ENCODE measurements at regions of chr11 and their contacts with region 1.

Region 1: GRCh38 chr11:17730608-17731462 is 3.7 kb upstream of the KCNC1 start:
- DNase-seq: peak; percentile 78
- H3K4me3 ChIP-seq: no peak overlapping the region
- H3K27ac ChIP-seq: no peak overlapping the region
- H3K4me1 ChIP-seq: peaks cover 7% of the 10 kb centered on the region
- H3K27me3 ChIP-seq: peaks cover 22 to 30% of the 10 kb centered on the region in 2 experiments
- CTCF ChIP-seq: peak; percentile 69 to 91
- POLR2A ChIP-seq: no peak

Region 2: DNA sequence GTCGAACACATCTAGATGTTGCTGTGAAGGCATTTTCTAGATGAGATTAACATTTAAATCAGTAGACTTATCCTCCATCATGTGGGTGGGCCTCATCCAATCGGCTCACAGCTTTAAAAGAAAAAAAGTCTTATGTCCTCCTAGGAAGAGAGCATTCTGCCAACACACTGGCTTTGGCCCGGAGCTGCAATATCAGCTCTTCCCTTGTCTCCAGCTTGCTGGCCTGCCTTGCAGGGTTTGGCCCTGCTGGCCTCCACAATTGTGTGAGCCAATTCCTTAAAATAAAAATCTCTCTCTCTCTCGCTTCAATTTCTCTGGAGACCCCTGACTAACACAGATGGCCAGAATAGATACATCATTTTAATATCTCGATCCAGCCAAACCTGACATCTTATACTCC is 241.1 kb before region 1 on chr11:
- CTCF ChIA-PET with region 1: no interaction called
- POLR2A ChIA-PET with region 1: no interaction called
- dilution Hi-C with region 1: no loop called
- intact Hi-C with region 1: loop called (anchors 5 kb)
- DNase-seq: no peak
- H3K4me3 ChIP-seq: no peak overlapping the region
- H3K27ac ChIP-seq: no peak overlapping the region
- H3K4me1 ChIP-seq: no peaks in the 10 kb centered on the region
- H3K27me3 ChIP-seq: peaks cover 0 to 2% of the 10 kb centered on the region in 2 experiments
- CTCF ChIP-seq: no peak
- POLR2A ChIP-seq: no peak

Region 3: DNA sequence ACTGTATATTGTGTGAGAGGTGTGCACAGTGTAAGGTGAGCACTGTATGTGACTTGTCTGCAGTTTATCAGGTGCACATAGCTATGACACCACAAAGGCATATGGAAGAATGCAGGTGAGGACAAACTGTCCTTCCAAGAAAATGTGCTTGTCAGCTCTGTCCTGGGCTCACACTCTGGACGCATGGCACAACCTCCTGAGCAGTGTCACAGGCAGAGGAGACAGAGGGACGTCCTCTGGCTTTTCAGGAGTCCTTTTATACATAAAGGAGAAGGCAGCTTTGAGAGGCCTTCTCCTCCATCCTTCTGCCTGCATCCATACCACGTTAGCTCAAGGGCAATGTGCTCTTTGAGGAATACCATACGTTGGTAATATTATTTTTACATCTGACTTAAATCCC is 19.0 kb before region 1 on chr11:
- CTCF ChIA-PET with region 1: interaction called, 13 read pairs
- POLR2A ChIA-PET with region 1: no interaction called
- dilution Hi-C with region 1: no loop called
- intact Hi-C with region 1: no loop called
- DNase-seq: no peak
- H3K4me3 ChIP-seq: no peak overlapping the region
- H3K27ac ChIP-seq: no peak overlapping the region
- H3K4me1 ChIP-seq: no peaks in the 10 kb centered on the region
- H3K27me3 ChIP-seq: peaks cover 7 to 21% of the 10 kb centered on the region in 2 experiments
- CTCF ChIP-seq: no peak
- POLR2A ChIP-seq: no peak

Region 4: DNA sequence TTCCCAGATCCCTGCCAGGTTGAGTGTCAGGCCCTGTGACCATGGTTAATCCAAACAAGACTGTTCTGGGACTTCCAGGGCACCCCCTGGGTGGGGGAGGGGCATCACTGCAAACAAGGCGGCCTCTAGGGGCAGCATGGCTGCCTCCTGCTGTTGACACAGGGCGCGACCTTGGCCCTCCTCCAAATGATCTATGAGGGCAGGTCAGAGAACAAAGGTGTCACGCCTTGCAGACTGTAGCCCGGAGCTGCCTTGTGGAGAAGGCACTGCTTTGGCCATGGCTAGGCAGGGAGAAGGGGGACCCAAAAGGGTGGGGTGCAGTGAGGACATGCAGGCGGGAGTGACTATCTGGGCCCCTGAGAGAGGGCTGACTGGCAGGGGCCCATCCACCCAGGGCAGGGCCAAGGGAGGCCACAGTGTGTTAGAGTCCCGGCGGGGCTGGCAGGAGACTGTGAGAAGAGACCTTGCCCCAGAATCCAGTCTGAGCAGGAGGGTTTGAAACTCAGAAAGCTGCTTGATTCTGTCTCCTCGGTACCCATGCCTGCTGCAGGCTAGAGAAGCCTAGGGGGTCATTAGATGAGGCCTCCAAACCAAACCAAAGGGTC is 39.3 kb after region 1 on chr11:
- CTCF ChIA-PET with region 1: interaction called, 19 read pairs
- POLR2A ChIA-PET with region 1: no interaction called
- dilution Hi-C with region 1: no loop called
- intact Hi-C with region 1: no loop called
- DNase-seq: no peak
- H3K4me3 ChIP-seq: no peak overlapping the region
- H3K27ac ChIP-seq: no peak overlapping the region
- H3K4me1 ChIP-seq: no peaks in the 10 kb centered on the region
- H3K27me3 ChIP-seq: no peaks in the 10 kb centered on the region
- CTCF ChIP-seq: no peak
- POLR2A ChIP-seq: no peak

Region 5: GRCh38 chr11:17798253-17798652 is 67.4 kb after region 1 on chr11:
- CTCF ChIA-PET with region 1: no interaction called
- POLR2A ChIA-PET with region 1: no interaction called
- dilution Hi-C with region 1: no loop called
- intact Hi-C with region 1: no loop called
- DNase-seq: no peak
- H3K4me3 ChIP-seq: no peak overlapping the region
- H3K27ac ChIP-seq: no peak overlapping the region
- H3K4me1 ChIP-seq: no peaks in the 10 kb centered on the region
- H3K27me3 ChIP-seq: no peaks in the 10 kb centered on the region
- CTCF ChIP-seq: no peak
- POLR2A ChIP-seq: no peak

Region 6: GRCh38 chr11:17972987-17973386 is 242.2 kb after region 1 on chr11:
- CTCF ChIA-PET with region 1: interaction called, 593 read pairs
- POLR2A ChIA-PET with region 1: interaction called, 3 read pairs
- dilution Hi-C with region 1: no loop called
- intact Hi-C with region 1: loop called (anchors 1 kb)
- DNase-seq: peak; percentile 44
- H3K4me3 ChIP-seq: no peak overlapping the region
- H3K27ac ChIP-seq: no peak overlapping the region
- H3K4me1 ChIP-seq: no peaks in the 10 kb centered on the region
- H3K27me3 ChIP-seq: no peaks in the 10 kb centered on the region
- CTCF ChIP-seq: peak; percentile 56 to 77
- POLR2A ChIP-seq: no peak

Region 7: GRCh38 chr11:17986007-17986710 is 255.3 kb after region 1 on chr11:
- CTCF ChIA-PET with region 1: interaction called, 593 read pairs
- POLR2A ChIA-PET with region 1: no interaction called
- dilution Hi-C with region 1: no loop called
- intact Hi-C with region 1: no loop called
- DNase-seq: no peak
- H3K4me3 ChIP-seq: no peak overlapping the region
- H3K27ac ChIP-seq: no peak overlapping the region
- H3K4me1 ChIP-seq: no peaks in the 10 kb centered on the region
- H3K27me3 ChIP-seq: no peaks in the 10 kb centered on the region
- CTCF ChIP-seq: no peak
- POLR2A ChIP-seq: no peak

Region 8: DNA sequence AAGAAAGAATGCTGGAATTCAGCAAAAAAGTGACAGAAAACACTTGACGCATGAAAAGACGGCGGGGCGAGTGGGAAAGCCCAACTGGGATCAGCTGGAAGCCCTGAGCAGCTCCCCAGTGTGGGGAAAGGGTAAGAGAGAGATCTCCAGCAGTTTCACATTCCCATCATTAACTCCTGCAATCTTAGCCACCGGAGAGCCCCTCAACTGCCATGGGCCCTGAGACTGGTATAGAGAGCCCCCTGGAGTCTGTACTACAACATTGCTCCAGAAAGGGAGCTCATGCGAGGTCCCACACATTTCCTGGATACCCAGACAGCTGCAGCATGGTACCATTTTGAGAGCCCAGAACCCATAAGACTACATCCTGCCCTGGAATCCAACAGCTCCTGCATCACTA is 472.9 kb after region 1 on chr11:
- CTCF ChIA-PET with region 1: interaction called, 10 read pairs
- POLR2A ChIA-PET with region 1: no interaction called
- dilution Hi-C with region 1: no loop called
- intact Hi-C with region 1: no loop called
- DNase-seq: peak; percentile 5
- H3K4me3 ChIP-seq: no peak overlapping the region
- H3K27ac ChIP-seq: no peak overlapping the region
- H3K4me1 ChIP-seq: no peaks in the 10 kb centered on the region
- H3K27me3 ChIP-seq: peaks cover 2 to 3% of the 10 kb centered on the region in 2 experiments
- CTCF ChIP-seq: peak; percentile 45 to 62
- POLR2A ChIP-seq: no peak

Measured in endothelial cell of umbilical vein (primary cell).